Esophagus muscularis mucosa (tissue), 4 donors: ENCODE measurements at regions of chr6 and their contacts with region 1.

Region 1: DNA sequence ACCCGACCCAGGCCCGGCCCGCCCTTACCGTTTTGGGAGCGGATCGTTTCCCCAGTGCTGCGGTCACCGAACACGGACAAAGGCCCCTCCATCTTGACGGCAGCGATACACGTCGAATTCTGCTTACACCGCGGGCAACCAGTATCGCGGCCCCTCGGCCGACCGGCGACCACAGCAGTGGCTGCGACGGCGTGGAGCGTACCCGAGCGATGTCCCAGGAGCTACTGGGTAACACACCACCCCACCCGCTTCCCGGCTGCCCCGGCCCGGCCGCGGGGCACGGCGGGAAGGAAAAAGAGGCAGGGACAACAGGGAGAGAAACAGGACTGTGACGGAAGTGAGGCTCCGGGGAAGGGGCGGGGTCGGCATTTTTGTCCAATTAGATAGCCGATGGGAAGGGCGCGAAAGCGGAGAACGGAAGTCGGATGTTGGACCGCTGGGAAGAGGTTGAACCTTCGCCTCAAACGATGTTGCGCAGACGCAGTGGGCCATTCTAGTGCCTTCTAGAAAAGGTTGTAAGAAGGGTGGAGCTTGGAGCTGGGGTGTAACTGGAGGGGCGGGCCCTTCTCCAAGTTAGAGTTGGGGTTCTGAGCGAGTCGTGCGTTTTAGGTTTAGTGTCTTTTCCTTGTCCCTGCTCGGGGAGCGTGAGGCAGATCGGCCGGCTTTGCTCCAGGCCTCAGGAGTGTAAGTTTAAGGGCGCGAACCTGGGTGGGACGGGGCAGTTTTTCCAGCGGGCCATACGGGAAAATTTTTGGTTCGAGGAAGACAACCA is at the start of gene TCP1:
- DNase-seq: peak; percentile 100
- H3K4me3 ChIP-seq: peak within 1 kb of the TSS; percentile 87 to 100 (median 97)
- H3K27ac ChIP-seq: peak within 1 kb of the TSS; percentile 96 to 99 (median 97)
- H3K4me1 ChIP-seq: peaks cover 38 to 80% (median 70%) of the 10 kb centered on the region in 4 donors
- H3K27me3 ChIP-seq: no peaks in the 10 kb centered on the region
- CTCF ChIP-seq: no peak
- EP300 ChIP-seq: no peak
- POLR2A ChIP-seq: peak; percentile 93
- total RNA-seq, gene TCP1: 103 to 140 (median 121) TPM

Region 2: GRCh38 chr6:159693128-159693893 is 96.3 kb before region 1 on chr6 and contains the start of gene SOD2:
- intact Hi-C with region 1: loop called (anchors 2 kb)
- DNase-seq: peak; percentile 97
- H3K4me3 ChIP-seq: peak within 1 kb of the TSS; percentile 85 to 100 (median 90)
- H3K27ac ChIP-seq: peak within 1 kb of the TSS; percentile 96 to 99 (median 98)
- H3K4me1 ChIP-seq: peaks cover 36 to 55% (median 54%) of the 10 kb centered on the region in 4 donors
- H3K27me3 ChIP-seq: no peaks in the 10 kb centered on the region
- CTCF ChIP-seq: no peak
- EP300 ChIP-seq: no peak
- POLR2A ChIP-seq: peak; percentile 95
- total RNA-seq, gene SOD2: 147 to 927 (median 395) TPM

Region 3: DNA sequence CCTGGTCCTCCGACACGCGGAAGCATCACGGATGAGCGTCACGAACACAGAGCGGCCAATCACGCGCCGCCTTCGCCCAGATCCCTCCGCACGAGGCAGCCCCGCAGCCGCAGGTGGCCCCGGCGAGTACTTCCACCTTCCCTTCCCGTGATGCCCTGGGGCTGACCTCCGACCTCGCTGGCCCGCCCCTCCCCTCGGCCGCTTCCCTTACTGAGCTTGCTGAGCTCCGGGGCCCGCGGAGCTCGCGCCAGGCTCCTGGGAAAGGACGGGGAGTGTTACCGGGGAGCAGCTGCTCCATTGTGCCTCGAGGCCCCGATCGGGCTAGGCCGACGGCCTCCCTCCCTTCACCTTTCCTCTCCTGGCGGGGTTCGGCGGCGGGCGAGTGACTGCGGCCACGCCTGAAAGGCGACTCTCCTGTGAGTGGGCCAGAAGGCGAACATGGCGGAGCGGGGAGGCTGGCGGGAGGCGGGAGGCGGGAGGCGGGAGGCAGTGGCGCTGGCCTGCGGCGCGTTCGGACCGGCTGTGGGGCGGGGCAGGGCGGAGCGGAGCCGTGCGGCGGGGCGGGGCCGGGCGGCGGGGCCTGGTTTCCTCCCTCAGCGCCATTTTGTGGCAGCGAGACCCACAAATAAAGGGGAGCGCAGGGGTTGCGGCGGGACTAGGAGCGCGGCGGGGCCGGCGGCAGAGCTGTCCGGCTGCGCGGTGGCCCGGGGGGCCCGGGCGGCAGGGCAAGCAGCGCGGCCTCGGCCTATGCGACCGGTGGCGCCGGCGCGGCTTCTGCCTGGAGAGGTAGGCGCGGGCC is 62.4 kb before region 1 on chr6 and contains the start of gene WTAP:
- intact Hi-C with region 1: loop called (anchors 5 kb)
- DNase-seq: peak; percentile 98
- H3K4me3 ChIP-seq: peak within 1 kb of the TSS; percentile 82 to 92 (median 89)
- H3K27ac ChIP-seq: peak within 1 kb of the TSS; percentile 98 to 99 (median 99)
- H3K4me1 ChIP-seq: peaks cover 38 to 59% (median 53%) of the 10 kb centered on the region in 4 donors
- H3K27me3 ChIP-seq: no peaks in the 10 kb centered on the region
- CTCF ChIP-seq: peak in 1 of 3 experiments; percentile 8
- EP300 ChIP-seq: no peak
- POLR2A ChIP-seq: peak; percentile 49
- total RNA-seq, gene WTAP: 62.7 to 96.9 (median 75.3) TPM

Region 4: DNA sequence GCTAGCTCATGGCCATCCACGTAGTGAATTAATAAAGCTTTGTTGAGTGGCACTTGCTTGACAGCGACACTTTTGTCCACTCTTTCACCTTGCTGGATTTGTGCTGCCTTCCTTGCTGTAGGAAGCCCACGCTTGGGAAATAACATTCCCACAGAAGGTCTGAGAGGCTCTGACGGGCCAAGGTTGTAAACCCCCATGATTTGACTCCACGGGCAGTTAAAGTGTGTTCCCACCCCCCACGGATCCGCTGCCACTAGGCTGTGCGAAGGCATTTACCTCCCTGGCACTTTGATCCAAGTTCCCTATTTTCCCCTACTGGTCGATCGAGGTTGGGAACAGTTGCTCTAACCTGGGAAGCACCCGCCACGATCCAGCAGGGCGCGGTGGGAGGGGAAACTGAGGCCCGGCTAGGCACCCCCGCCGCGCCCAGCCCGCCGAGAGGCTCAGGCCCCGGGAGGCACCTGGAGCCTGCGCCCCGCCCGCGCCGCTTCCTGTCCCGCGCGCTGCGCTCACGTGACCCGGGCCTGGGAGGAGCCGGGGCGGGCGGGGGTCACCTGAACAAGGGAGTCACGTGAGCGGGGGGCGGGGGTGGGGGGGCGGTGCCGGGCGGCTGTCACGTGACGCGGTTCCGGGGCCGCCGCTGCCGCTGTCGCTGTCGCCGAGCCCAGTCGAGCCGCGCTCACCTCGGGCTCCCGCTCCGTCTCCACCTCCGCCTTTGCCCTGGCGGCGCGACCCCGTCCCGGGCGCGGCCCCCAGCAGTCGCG is 179.1 kb after region 1 on chr6 and contains the start of gene IGF2R:
- intact Hi-C with region 1: loop called (anchors 10 kb)
- DNase-seq: peak; percentile 98
- H3K4me3 ChIP-seq: peak within 1 kb of the TSS; percentile 77 to 98 (median 96)
- H3K27ac ChIP-seq: peak within 1 kb of the TSS; percentile 88 to 95 (median 90)
- H3K4me1 ChIP-seq: peaks cover 33 to 46% (median 44%) of the 10 kb centered on the region in 4 donors
- H3K27me3 ChIP-seq: peaks cover 0 to under 1% (median 0%) of the 10 kb centered on the region in 4 donors
- CTCF ChIP-seq: no peak
- EP300 ChIP-seq: no peak
- POLR2A ChIP-seq: peak; percentile 91
- total RNA-seq, gene IGF2R: 43.6 to 75.3 (median 58.4) TPM

Region 5: GRCh38 chr6:160030103-160030502 is 240.5 kb after region 1 on chr6:
- intact Hi-C with region 1: loop called (anchors 10 kb)
- DNase-seq: peak; percentile 95
- H3K4me3 ChIP-seq: peak overlapping the region in 3 of 4 donors; percentile 1 to 21 (median 15)
- H3K27ac ChIP-seq: peak overlapping the region; percentile 73 to 79 (median 76)
- H3K4me1 ChIP-seq: peaks cover 17 to 20% (median 18%) of the 10 kb centered on the region in 4 donors
- H3K27me3 ChIP-seq: no peaks in the 10 kb centered on the region
- CTCF ChIP-seq: peak in 1 of 3 experiments; percentile 14
- EP300 ChIP-seq: no peak
- POLR2A ChIP-seq: no peak

Region 6: GRCh38 chr6:160178271-160178670 is 388.7 kb after region 1 on chr6:
- intact Hi-C with region 1: no loop called
- DNase-seq: peak; percentile 29
- H3K4me3 ChIP-seq: no peak overlapping the region
- H3K27ac ChIP-seq: no peak overlapping the region
- H3K4me1 ChIP-seq: no peaks in the 10 kb centered on the region
- H3K27me3 ChIP-seq: no peaks in the 10 kb centered on the region
- CTCF ChIP-seq: no peak
- EP300 ChIP-seq: no peak
- POLR2A ChIP-seq: no peak

Region 7: DNA sequence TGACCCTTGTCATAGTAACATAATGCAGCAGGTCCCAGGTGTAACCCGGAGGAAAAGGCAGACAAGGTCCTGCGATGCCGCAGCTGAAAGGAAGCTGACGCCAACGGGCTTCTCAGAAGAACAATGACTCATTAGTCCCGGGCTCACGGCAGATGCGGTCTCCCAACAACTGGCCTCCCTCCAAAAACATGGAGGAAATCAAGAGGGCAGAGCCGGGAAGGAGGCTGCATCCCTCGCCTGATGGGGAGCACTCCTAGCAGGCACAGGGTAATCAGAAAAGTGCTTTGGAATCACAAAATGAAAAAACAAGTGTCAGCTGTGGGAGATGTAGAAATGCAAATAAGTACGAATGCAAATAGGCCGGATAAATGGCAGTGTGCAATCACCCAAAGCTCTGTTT is 1649.5 kb after region 1 on chr6:
- intact Hi-C with region 1: no loop called
- DNase-seq: no peak
- H3K4me3 ChIP-seq: peak overlapping the region in 3 of 4 donors; percentile 10 to 24 (median 21)
- H3K27ac ChIP-seq: peak overlapping the region; percentile 19 to 67 (median 49)
- H3K4me1 ChIP-seq: peaks cover 23 to 61% (median 50%) of the 10 kb centered on the region in 4 donors
- H3K27me3 ChIP-seq: no peaks in the 10 kb centered on the region
- CTCF ChIP-seq: no peak
- EP300 ChIP-seq: peak; percentile 33
- POLR2A ChIP-seq: no peak